Upper lobe of right lung (tissue), 1 donor: ENCODE measurements at regions of chr7 and their contacts with region 1.

Region 1: DNA sequence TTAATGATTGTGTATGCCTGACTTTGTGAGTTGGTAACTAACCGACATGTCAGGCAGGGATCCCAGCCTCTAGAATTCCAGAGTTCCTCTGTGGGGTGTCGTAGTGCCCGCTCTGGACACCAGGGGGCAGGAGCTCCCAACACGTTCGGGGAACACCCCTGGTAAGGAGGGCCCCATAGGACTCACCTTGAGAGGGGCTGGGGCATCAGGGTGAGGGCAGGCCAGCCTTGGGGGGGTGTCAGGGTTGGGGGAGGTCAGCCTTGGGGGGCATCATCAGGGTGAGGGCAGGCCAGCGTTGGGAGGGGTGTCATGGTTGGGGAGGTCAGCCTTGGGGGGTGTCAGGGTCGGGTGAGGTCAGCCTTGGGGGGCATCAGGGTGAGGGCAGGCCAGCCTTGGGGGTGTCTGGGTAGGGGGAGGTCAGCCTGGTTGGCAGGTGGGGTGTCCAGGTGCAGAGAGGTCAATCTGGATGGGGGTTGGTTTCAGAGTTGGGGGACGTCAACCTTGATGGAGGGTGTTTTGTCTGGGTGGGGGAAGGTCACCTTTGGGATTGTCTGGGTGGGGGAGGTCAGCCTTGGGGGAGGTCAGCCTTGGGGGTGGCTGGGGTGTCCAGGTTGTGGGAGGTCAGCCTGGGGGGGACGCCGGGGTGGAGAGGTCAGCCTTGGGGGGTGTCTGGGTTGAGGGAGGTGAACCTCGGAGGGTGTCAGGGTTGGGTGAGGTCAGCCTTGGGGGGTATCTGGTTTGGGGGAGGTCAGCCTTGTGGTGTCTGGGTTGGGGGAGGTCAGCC is 45.6 kb upstream of the SUN1 start:
- DNase-seq: peak; percentile 85
- ATAC-seq: peak; percentile 92
- H3K4me3 ChIP-seq: no peak overlapping the region
- H3K27ac ChIP-seq: no peak overlapping the region
- H3K4me1 ChIP-seq: no peaks in the 10 kb centered on the region
- H3K27me3 ChIP-seq: no peaks in the 10 kb centered on the region
- CTCF ChIP-seq: peak; percentile 76

Region 2: GRCh38 chr7:552868-553635 is 233.6 kb before region 1 on chr7:
- intact Hi-C with region 1: no loop called
- DNase-seq: no peak
- ATAC-seq: peak; percentile 63
- H3K4me3 ChIP-seq: no peak overlapping the region
- H3K27ac ChIP-seq: no peak overlapping the region
- H3K4me1 ChIP-seq: no peaks in the 10 kb centered on the region
- H3K27me3 ChIP-seq: no peaks in the 10 kb centered on the region
- CTCF ChIP-seq: no peak

Region 3: GRCh38 chr7:584122-584465 is 202.6 kb before region 1 on chr7:
- intact Hi-C with region 1: no loop called
- DNase-seq: no peak
- ATAC-seq: peak; percentile 36
- H3K4me3 ChIP-seq: peak overlapping the region; percentile 14
- H3K27ac ChIP-seq: no peak overlapping the region
- H3K4me1 ChIP-seq: no peaks in the 10 kb centered on the region
- H3K27me3 ChIP-seq: no peaks in the 10 kb centered on the region
- CTCF ChIP-seq: no peak

Region 4: DNA sequence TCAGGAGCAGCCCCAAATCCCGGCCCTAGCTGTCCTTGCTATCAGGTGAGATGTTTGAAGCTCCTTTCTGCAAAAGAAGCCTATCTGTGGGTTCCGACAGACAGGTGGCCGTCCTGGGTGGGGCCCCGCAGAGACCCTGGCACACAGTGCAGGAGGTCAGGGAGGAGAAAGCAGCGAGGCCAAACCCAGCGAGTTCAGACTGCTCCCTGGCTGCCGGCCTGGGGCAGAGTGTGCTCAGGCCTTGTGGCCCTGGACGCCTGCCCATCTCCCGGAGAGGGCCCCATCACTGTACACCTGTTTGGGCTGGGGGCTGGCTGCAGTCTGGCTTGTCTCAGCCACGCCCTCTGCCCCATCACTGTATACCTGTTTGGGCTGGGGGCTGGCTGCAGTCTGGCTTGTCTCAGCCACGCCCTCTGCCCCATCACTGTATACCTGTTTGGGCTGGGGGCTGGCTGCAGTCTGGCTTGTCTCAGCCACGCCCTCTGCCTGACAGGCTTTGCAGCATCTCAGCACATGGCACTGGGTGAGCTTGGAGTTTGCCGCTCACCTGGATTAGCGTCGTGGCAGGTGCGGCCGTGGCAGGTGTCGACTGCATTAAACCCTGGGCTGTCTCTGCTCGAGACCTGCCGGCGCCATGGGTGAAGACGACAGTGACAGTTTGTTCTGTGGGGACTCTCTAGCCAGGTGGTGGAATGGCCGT is 47.8 kb before region 1 on chr7:
- intact Hi-C with region 1: no loop called
- DNase-seq: peak; percentile 55
- ATAC-seq: no peak
- H3K4me3 ChIP-seq: no peak overlapping the region
- H3K27ac ChIP-seq: no peak overlapping the region
- H3K4me1 ChIP-seq: no peaks in the 10 kb centered on the region
- H3K27me3 ChIP-seq: no peaks in the 10 kb centered on the region
- CTCF ChIP-seq: no peak

Region 5: GRCh38 chr7:876167-876967 is 89.7 kb after region 1 on chr7 and contains the start of gene GET4:
- intact Hi-C with region 1: loop called (anchors 5 kb)
- DNase-seq: peak; percentile 98
- ATAC-seq: peak; percentile 90
- H3K4me3 ChIP-seq: peak within 1 kb of the TSS; percentile 71
- H3K27ac ChIP-seq: peak within 1 kb of the TSS; percentile 88
- H3K4me1 ChIP-seq: peaks cover 32% of the 10 kb centered on the region
- H3K27me3 ChIP-seq: no peaks in the 10 kb centered on the region
- CTCF ChIP-seq: no peak
- total RNA-seq, gene GET4: 35.1 TPM

Region 6: DNA sequence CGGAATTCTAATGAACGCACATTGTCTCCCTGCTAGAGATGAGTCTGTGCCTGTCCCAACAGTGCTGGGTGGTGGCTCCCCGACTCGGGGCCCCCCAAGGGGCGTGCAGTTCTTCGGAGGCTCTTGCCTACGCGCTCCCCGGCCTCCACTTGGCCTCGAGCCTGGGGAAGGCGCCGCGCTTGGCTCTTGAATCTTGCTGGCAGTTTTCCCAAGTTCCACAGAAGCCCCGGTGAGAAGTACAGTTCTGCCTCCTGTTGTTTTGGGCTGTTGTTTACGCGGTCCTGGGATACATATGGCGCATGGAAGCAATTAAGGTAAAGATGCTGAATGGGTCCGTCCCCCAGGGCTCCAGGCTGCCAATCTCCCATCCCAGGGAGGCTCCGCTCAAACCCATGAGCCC is 413.4 kb after region 1 on chr7:
- intact Hi-C with region 1: no loop called
- DNase-seq: no peak
- ATAC-seq: no peak
- H3K4me3 ChIP-seq: no peak overlapping the region
- H3K27ac ChIP-seq: no peak overlapping the region
- H3K4me1 ChIP-seq: no peaks in the 10 kb centered on the region
- H3K27me3 ChIP-seq: peaks cover 31% of the 10 kb centered on the region
- CTCF ChIP-seq: no peak